ENCODE measurements at regions of chr18 and their contacts with region 1.

Region 1: GRCh38 chr18:56322406-56322805 is 316.0 kb downstream of the TXNL1 start:
- DNase-seq: no peak
- ATAC-seq: no peak
- H3K4me3 ChIP-seq: no peak overlapping the region
- H3K4me3 Mint-ChIP-seq: no peak overlapping the region
- H3K27ac ChIP-seq: no peak overlapping the region
- H3K27ac Mint-ChIP-seq: no peak overlapping the region
- H3K4me1 ChIP-seq: no peaks in the 10 kb centered on the region
- H3K4me1 Mint-ChIP-seq: no peaks in the 10 kb centered on the region
- H3K27me3 ChIP-seq: no peaks in the 10 kb centered on the region
- H3K27me3 Mint-ChIP-seq: no peaks in the 10 kb centered on the region
- CTCF ChIP-seq: no peak

Region 2: DNA sequence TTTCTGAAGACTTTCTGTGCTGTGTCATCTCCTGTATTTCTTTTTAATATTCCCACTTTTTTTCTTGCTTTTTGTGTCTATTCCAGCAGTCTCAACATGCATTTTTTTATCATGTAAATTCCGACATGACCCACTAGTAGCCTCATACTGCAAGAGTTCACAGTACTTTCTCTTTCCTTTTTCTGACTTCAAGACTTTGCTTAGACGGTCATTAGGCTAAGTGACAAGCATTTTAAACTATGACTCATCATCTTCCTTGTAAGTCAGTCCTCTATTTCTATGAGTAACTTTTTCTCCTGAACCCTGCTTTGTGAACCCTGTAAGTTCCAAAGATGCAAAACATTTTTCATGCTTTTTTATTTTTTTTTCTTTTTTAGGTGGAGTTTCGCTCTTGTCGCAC is 65.2 kb before region 1 on chr18:
- CTCF ChIA-PET with region 1: no interaction called
- POLR2A ChIA-PET with region 1: no interaction called
- intact Hi-C with region 1: no loop called
- DNase-seq: peak in 1 of 9 experiments; percentile 3
- ATAC-seq: no peak
- H3K4me3 ChIP-seq: no peak overlapping the region
- H3K4me3 Mint-ChIP-seq: no peak overlapping the region
- H3K27ac ChIP-seq: no peak overlapping the region
- H3K27ac Mint-ChIP-seq: no peak overlapping the region
- H3K4me1 ChIP-seq: no peaks in the 10 kb centered on the region
- H3K4me1 Mint-ChIP-seq: no peaks in the 10 kb centered on the region
- H3K27me3 ChIP-seq: no peaks in the 10 kb centered on the region
- H3K27me3 Mint-ChIP-seq: no peaks in the 10 kb centered on the region
- CTCF ChIP-seq: no peak

Region 3: DNA sequence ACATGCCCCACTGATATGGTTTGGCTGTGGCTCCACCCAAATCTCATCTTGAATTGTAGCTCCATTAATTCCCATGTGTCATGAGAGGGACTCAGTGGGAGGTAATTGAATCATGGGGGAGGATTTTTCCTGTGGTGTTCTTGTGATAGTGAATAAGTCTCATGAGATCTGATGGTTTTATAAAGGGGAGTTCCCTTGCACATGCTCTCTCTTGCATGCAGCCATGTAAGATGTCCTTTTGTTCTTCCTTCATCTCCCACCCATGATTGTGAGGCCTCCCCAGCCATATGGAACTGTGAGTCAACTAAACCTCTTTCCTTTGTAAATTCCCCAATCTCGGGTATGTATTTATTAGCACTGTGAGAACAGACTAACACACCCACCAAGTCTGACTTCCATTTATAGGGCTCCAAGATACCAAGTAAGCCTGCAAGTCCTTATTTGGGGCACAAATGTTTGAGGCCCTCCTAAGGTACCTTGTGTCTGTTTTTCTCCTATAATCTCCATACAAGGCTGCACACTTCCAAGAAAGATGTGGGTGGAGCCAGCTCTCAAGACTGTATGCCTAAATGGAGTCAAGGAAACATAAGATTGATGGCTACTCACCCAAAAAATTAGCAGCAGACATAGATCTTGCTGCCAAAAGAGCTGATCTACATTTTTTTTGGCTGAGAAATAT is 48.7 kb before region 1 on chr18:
- CTCF ChIA-PET with region 1: no interaction called
- POLR2A ChIA-PET with region 1: no interaction called
- intact Hi-C with region 1: loop called in 1 of 2 experiments (anchors 2 kb)
- DNase-seq: no peak
- ATAC-seq: no peak
- H3K4me3 ChIP-seq: no peak overlapping the region
- H3K4me3 Mint-ChIP-seq: no peak overlapping the region
- H3K27ac ChIP-seq: no peak overlapping the region
- H3K27ac Mint-ChIP-seq: no peak overlapping the region
- H3K4me1 ChIP-seq: no peaks in the 10 kb centered on the region
- H3K4me1 Mint-ChIP-seq: no peaks in the 10 kb centered on the region
- H3K27me3 ChIP-seq: no peaks in the 10 kb centered on the region
- H3K27me3 Mint-ChIP-seq: no peaks in the 10 kb centered on the region
- CTCF ChIP-seq: no peak

Region 4: DNA sequence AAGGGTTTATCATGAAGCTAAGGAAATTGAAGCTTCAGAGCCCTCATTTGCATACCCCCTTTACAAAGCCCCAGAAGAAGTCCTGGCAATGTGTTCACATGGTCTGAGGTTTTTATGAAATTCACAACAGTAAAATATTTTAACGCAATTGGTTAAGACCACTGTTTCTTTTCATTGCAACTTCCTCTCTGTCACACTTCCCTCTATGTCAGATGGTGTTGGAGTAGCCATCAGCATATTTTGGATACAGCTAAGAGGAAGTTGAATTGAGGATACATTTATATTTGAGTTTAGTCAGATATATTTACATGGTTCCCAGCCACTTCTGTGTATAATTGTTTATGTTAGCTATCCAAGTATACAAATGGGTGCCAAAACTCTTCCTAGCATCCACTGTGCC is 146.0 kb after region 1 on chr18:
- CTCF ChIA-PET with region 1: no interaction called
- POLR2A ChIA-PET with region 1: no interaction called
- intact Hi-C with region 1: no loop called
- DNase-seq: no peak
- ATAC-seq: no peak
- H3K4me3 ChIP-seq: no peak overlapping the region
- H3K4me3 Mint-ChIP-seq: no peak overlapping the region
- H3K27ac ChIP-seq: no peak overlapping the region
- H3K27ac Mint-ChIP-seq: no peak overlapping the region
- H3K4me1 ChIP-seq: no peaks in the 10 kb centered on the region
- H3K4me1 Mint-ChIP-seq: no peaks in the 10 kb centered on the region
- H3K27me3 ChIP-seq: no peaks in the 10 kb centered on the region
- H3K27me3 Mint-ChIP-seq: no peaks in the 10 kb centered on the region
- CTCF ChIP-seq: no peak